ENCODE measurements at regions of chr12 and their contacts with region 1.

Region 1: DNA sequence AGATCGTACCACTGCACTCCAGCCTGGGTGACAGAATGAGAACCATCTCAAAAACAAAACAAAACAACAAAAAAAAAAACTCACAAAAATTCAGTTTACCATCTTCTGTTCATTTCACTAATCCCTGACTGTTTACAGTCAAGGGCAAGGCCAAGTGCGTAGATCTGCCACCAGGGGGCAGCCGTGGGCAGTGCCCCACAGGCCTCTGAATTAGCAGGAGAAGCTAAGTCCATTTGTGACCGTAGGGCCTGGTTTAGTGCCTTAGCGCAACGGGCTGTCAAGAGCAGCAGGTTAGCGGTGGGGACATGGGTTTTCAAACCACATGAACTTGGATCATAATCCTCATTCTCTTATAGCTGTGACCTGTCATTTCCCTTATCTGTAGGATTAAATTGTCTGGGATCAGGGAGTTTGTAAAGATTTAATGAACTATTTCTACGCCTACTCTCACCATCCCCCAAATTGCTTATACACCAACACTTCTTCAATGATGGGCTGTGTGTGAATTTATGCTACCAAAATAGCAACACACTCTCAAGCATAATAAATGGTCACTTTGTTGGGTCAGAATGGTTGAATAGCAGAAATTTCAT is 49.0 kb downstream of the KCTD10 start:
- DNase-seq: peak; percentile 57
- H3K4me3 ChIP-seq: no peak overlapping the region
- H3K27ac ChIP-seq: no peak overlapping the region
- H3K4me1 ChIP-seq: peaks cover 6% of the 10 kb centered on the region
- H3K27me3 ChIP-seq: no peaks in the 10 kb centered on the region
- CTCF ChIP-seq: peak; percentile 99

Region 2: GRCh38 chr12:109247831-109248654 is 180.1 kb before region 1 on chr12:
- CTCF ChIA-PET with region 1: no interaction called
- dilution Hi-C with region 1: no loop called
- in situ Hi-C with region 1: no loop called
- intact Hi-C with region 1: no loop called
- DNase-seq: no peak
- H3K4me3 ChIP-seq: no peak overlapping the region
- H3K27ac ChIP-seq: no peak overlapping the region
- H3K4me1 ChIP-seq: no peaks in the 10 kb centered on the region
- H3K27me3 ChIP-seq: no peaks in the 10 kb centered on the region
- CTCF ChIP-seq: no peak

Region 3: DNA sequence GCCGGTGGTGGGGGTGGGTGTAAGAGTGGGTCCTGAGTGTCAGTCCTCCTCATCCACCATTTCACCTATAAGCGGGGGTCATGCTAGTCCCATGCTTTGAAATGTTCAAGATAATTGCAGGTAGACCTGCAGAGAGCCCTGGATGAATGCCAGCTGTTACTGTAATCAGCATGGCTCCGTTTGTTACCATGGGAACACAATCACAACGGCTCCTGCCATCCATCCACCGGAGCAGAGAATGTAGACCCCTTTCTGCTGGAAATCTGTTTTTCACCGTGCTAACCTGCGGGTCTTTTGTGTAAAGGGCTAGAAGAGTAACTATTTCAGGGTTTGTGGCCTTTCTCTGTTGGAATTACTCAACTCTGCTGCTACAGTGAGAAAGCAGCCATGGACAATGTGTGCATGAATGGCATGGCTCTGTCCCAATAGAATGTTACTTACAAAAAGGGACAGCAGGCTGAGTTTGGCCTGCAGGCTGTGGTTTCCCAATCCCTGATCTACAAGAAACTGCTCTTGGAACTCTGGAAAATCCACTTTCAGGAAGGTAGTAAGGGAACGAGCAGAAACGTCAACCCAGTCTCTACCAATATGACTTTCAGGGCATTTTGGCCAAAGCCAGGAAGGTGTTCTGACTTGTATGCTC is 12.8 kb after region 1 on chr12:
- CTCF ChIA-PET with region 1: interaction called, 23 read pairs
- dilution Hi-C with region 1: no loop called
- in situ Hi-C with region 1: no loop called
- intact Hi-C with region 1: no loop called
- DNase-seq: peak; percentile 30
- H3K4me3 ChIP-seq: no peak overlapping the region
- H3K27ac ChIP-seq: no peak overlapping the region
- H3K4me1 ChIP-seq: no peaks in the 10 kb centered on the region
- H3K27me3 ChIP-seq: no peaks in the 10 kb centered on the region
- CTCF ChIP-seq: no peak

Region 4: GRCh38 chr12:109462710-109463692 is 34.9 kb after region 1 on chr12:
- CTCF ChIA-PET with region 1: interaction called, 3 read pairs
- dilution Hi-C with region 1: no loop called
- in situ Hi-C with region 1: no loop called
- intact Hi-C with region 1: loop called (anchors 1 kb)
- DNase-seq: peak; percentile 76
- H3K4me3 ChIP-seq: peak overlapping the region in 2 of 3 experiments; percentile 6 to 10
- H3K27ac ChIP-seq: peak overlapping the region; percentile 62
- H3K4me1 ChIP-seq: peaks cover 48% of the 10 kb centered on the region
- H3K27me3 ChIP-seq: no peaks in the 10 kb centered on the region
- CTCF ChIP-seq: no peak

Region 5: DNA sequence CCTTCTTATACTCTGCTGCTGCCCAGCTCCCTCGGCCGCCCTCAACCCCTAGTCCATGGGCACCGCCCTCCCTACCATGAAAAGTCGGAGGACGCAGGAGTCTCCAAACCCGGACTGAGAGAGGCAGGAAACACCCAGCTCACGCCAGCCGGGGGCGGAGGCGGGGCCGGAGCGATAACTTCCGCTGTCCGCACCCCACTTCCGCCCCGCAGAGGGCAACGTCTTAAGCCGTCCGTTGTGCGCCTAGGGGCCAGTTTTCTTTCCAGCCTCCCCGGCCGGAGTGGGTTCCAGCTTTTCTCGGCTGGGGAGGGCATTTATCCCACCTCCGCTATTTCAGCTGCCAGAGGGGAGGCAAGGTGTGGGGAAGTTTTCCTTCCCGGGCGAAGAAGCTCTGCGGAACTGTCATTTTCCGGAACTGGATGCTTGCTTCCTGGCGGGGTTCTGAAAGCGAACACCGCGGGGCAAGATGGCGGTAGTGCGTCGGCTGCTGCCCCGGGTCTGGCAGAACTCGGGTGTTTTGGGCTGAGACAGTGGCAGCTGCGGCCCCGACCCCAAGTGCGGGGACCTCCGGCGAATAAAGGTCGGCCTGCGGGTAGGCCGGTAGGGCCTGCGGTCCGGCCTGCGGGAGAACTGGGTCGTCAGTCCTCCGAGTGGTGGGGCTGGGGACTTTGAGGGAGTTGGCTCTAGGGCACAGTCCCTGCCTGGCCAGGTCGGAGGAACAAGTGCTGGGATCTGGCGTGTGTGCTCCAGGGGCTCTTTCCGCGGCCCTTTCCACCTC is 49.2 kb after region 1 on chr12 and contains the starts of genes KCTD10 and UBE3B:
- CTCF ChIA-PET with region 1: no interaction called
- dilution Hi-C with region 1: no loop called
- in situ Hi-C with region 1: loop called in 1 of 2 experiments (anchors 5 kb)
- intact Hi-C with region 1: loop called (anchors 1 kb)
- DNase-seq: peak; percentile 84
- H3K4me3 ChIP-seq: peak within 1 kb of the TSS; percentile 75 to 85 (median 76)
- H3K27ac ChIP-seq: peak within 1 kb of the TSS; percentile 88
- H3K4me1 ChIP-seq: peaks cover 29% of the 10 kb centered on the region
- H3K27me3 ChIP-seq: no peaks in the 10 kb centered on the region
- CTCF ChIP-seq: no peak
- total RNA-seq, gene KCTD10: 71.2 to 125 TPM
- total RNA-seq, gene UBE3B: 31.2 to 53.7 TPM

Region 6: GRCh38 chr12:109497675-109498074 is 69.5 kb after region 1 on chr12:
- CTCF ChIA-PET with region 1: interaction called, 6 read pairs
- dilution Hi-C with region 1: no loop called
- in situ Hi-C with region 1: no loop called
- intact Hi-C with region 1: loop called (anchors 1 kb)
- DNase-seq: peak; percentile 88
- H3K4me3 ChIP-seq: no peak overlapping the region
- H3K27ac ChIP-seq: peak overlapping the region; percentile 46
- H3K4me1 ChIP-seq: peaks cover 13% of the 10 kb centered on the region
- H3K27me3 ChIP-seq: no peaks in the 10 kb centered on the region
- CTCF ChIP-seq: no peak

Region 7: DNA sequence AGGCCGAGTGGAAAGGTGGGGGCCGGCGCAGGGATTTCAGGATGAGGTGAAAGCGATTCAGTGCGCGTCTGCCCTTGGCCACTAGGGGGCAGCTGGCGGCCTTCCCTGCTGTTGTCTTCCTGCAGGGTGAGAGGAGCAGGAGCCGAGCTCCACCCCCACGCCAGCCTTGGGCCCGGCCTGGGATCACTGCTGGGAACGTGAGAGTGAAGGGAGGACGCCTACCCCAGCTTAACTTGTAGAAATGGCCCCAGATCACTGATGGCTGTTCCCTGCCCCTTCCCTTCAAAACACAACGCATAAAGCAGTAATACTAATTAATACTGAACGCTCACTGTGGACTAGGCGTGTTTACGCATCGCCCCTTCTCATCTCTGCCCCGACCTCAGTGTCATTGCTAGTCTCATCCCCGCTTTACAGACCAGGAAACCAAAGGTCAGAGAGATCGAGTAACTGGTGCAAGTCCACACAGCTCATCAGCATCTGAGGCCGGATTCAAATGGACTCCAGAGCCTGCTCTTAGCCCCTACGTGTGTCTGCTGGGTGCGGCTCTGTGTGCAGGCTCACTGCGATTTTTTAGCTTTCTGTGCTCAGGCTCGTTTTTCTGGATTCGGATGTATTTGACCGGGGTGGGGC is 169.8 kb after region 1 on chr12:
- CTCF ChIA-PET with region 1: no interaction called
- dilution Hi-C with region 1: no loop called
- in situ Hi-C with region 1: no loop called
- intact Hi-C with region 1: loop called (anchors 5 kb)
- DNase-seq: peak; percentile 62
- H3K4me3 ChIP-seq: no peak overlapping the region
- H3K27ac ChIP-seq: no peak overlapping the region
- H3K4me1 ChIP-seq: peaks cover 5% of the 10 kb centered on the region
- H3K27me3 ChIP-seq: no peaks in the 10 kb centered on the region
- CTCF ChIP-seq: peak; percentile 91 to 97

Measured in mammary epithelial cell (primary cell).